MCF 10A (cell line): ENCODE measurements at regions of chr7 and their contacts with region 1.

Region 1: DNA sequence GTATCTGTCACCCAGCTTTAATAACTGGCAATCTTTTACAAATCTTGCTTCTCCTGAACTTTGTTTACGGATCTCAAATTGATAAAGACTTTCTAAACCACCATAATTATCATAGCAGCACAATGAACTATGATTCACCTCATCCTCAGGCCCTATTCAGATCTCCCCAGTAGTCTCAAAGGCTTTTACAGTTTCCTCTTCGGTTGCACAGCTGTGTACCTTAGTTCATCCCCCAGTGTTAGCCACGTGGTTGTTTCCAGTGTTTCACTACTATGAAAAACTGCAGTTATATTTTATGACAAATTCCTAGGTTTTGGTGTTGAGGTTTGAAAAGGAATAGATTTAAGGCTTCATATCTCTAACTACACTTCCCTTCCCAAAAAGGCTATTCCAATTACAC is 24.9 kb downstream of the PAXIP1 start:
- DNase-seq: no peak
- H3K4me3 Mint-ChIP-seq: no peak overlapping the region
- H3K27ac Mint-ChIP-seq: no peak overlapping the region
- H3K4me1 Mint-ChIP-seq: no peaks in the 10 kb centered on the region
- H3K27me3 Mint-ChIP-seq: no peaks in the 10 kb centered on the region
- CTCF ChIP-seq: no peak

Region 2: GRCh38 chr7:154841731-154842331 is 136.2 kb before region 1 on chr7:
- CTCF ChIA-PET with region 1: no interaction called
- POLR2A ChIA-PET with region 1: no interaction called
- intact Hi-C with region 1: no loop called
- DNase-seq: no peak
- H3K4me3 Mint-ChIP-seq: no peak overlapping the region
- H3K27ac Mint-ChIP-seq: no peak overlapping the region
- H3K4me1 Mint-ChIP-seq: no peaks in the 10 kb centered on the region
- H3K27me3 Mint-ChIP-seq: peaks cover 58% of the 10 kb centered on the region
- CTCF ChIP-seq: no peak

Region 3: GRCh38 chr7:154953006-154953684 is 24.9 kb before region 1 on chr7:
- CTCF ChIA-PET with region 1: interaction called, 10 read pairs
- POLR2A ChIA-PET with region 1: interaction called, 3 read pairs
- intact Hi-C with region 1: no loop called
- DNase-seq: peak; percentile 56
- H3K4me3 Mint-ChIP-seq: no peak overlapping the region
- H3K27ac Mint-ChIP-seq: no peak overlapping the region
- H3K4me1 Mint-ChIP-seq: no peaks in the 10 kb centered on the region
- H3K27me3 Mint-ChIP-seq: no peaks in the 10 kb centered on the region
- CTCF ChIP-seq: peak; percentile 41

Region 4: GRCh38 chr7:155084969-155085368 is 107.0 kb after region 1 on chr7:
- CTCF ChIA-PET with region 1: no interaction called
- POLR2A ChIA-PET with region 1: no interaction called
- intact Hi-C with region 1: no loop called
- DNase-seq: no peak
- H3K4me3 Mint-ChIP-seq: no peak overlapping the region
- H3K27ac Mint-ChIP-seq: no peak overlapping the region
- H3K4me1 Mint-ChIP-seq: no peaks in the 10 kb centered on the region
- H3K27me3 Mint-ChIP-seq: peaks cover 34% of the 10 kb centered on the region
- CTCF ChIP-seq: no peak